Ascending aorta (tissue), 2 donors: ENCODE measurements at regions of chr10 and their contacts with region 1.

Region 1: GRCh38 chr10:24642622-24643417 is 80.9 kb downstream of the ARHGAP21 start:
- DNase-seq: no peak
- H3K4me3 ChIP-seq: no peak overlapping the region
- H3K27ac ChIP-seq: no peak overlapping the region
- H3K4me1 ChIP-seq: peaks cover 4 to 19% of the 10 kb centered on the region in 2 donors
- H3K27me3 ChIP-seq: no peaks in the 10 kb centered on the region
- CTCF ChIP-seq: peak; percentile 70 to 74 (median 71)

Region 2: DNA sequence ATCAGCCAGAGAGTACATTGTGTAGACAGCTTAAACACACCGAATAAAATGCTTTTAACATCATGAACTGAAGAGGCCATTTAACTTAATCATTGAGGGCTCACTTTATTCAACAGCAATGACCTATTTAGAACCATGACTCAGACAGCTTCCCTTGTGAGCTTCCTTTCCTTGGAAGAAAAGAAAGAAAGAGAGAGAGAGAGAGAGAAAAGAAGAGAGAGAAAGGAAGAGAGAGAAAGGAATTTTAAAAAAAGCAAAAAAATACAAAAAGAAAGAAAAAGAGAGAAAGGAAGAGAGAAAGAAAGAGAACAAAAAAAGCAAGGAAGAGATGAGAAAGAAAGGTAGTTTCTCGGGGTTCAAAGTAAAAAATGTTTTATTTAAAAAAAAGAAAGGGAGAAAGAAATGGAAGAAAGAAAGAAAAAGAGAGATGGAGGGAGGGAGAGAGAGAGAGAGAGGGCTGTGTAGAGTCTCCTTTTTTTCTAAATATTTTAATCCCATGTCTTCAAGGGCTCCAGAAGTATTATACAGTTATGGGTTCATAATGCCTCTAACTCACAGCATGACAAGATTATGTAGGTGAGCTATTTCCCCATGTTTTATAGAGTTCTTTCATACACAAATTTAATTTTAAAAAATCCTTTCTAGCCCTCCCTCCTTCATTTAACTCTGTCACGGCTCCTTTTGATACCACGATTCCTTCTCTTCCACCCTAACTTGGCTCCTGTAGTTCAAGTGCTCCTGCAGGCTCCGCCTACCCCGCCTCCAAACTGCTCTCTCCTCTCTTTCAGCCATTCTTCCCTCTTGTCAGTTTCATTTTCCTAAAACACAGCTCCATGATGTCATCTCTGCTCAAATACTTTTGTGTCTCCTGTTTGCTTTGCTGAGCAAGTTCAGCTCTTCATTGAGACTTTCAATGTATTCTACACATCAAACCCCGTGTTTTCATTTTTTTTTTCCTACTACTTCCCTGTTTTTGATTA is 224.1 kb after region 1 on chr10:
- intact Hi-C with region 1: loop called (anchors 5 kb)
- DNase-seq: no peak
- H3K4me3 ChIP-seq: peak overlapping the region in 1 of 2 donors; percentile 43
- H3K27ac ChIP-seq: peak overlapping the region in 1 of 2 donors; percentile 62
- H3K4me1 ChIP-seq: peaks cover 0 to 5% of the 10 kb centered on the region in 2 donors
- H3K27me3 ChIP-seq: no peaks in the 10 kb centered on the region
- CTCF ChIP-seq: no peak

Region 3: GRCh38 chr10:24908793-24909423 is 266.1 kb after region 1 on chr10:
- intact Hi-C with region 1: no loop called
- DNase-seq: no peak
- H3K4me3 ChIP-seq: no peak overlapping the region
- H3K27ac ChIP-seq: no peak overlapping the region
- H3K4me1 ChIP-seq: peaks cover 0 to 9% of the 10 kb centered on the region in 2 donors
- H3K27me3 ChIP-seq: no peaks in the 10 kb centered on the region
- CTCF ChIP-seq: no peak

Region 4: DNA sequence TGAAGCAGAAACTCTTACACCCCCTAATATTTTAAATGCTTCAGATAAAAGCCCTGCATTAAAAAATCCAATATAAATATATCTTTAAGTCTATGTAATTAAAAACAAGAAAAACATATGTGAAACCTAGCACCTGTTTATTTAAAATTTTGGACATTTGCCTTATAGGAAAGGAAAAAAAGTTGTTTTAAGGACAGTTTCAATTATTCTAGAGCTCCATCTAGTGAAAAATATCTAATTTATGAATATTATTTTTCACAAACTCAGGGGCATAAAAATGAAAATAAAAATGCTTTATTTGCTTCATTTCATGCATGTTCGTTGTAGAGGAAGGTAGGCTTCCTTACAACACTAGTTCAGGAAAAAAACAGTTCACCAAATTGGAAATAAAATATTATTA is 347.0 kb after region 1 on chr10:
- intact Hi-C with region 1: loop called (anchors 2 kb)
- DNase-seq: no peak
- H3K4me3 ChIP-seq: no peak overlapping the region
- H3K27ac ChIP-seq: no peak overlapping the region
- H3K4me1 ChIP-seq: no peaks in the 10 kb centered on the region
- H3K27me3 ChIP-seq: no peaks in the 10 kb centered on the region
- CTCF ChIP-seq: peak; percentile 21 to 59 (median 26)

Region 5: GRCh38 chr10:25080880-25081581 is 438.2 kb after region 1 on chr10:
- intact Hi-C with region 1: loop called (anchors 2 kb)
- DNase-seq: peak; percentile 36 to 91
- H3K4me3 ChIP-seq: peak overlapping the region in 1 of 2 donors; percentile 48
- H3K27ac ChIP-seq: peak overlapping the region; percentile 11 to 75
- H3K4me1 ChIP-seq: peaks cover 0 to 15% of the 10 kb centered on the region in 2 donors
- H3K27me3 ChIP-seq: no peaks in the 10 kb centered on the region
- CTCF ChIP-seq: peak; percentile 77 to 91 (median 86)